Activated CD8-positive, alpha-beta T cell treated with anti-CD3 and anti-CD28 coated beads, Interleukin-2, amount 10 ng/mL, durations not matched to agents 7 days and 5 days (primary cell): ENCODE measurements at regions of chr16 and their contacts with region 1.

Region 1: DNA sequence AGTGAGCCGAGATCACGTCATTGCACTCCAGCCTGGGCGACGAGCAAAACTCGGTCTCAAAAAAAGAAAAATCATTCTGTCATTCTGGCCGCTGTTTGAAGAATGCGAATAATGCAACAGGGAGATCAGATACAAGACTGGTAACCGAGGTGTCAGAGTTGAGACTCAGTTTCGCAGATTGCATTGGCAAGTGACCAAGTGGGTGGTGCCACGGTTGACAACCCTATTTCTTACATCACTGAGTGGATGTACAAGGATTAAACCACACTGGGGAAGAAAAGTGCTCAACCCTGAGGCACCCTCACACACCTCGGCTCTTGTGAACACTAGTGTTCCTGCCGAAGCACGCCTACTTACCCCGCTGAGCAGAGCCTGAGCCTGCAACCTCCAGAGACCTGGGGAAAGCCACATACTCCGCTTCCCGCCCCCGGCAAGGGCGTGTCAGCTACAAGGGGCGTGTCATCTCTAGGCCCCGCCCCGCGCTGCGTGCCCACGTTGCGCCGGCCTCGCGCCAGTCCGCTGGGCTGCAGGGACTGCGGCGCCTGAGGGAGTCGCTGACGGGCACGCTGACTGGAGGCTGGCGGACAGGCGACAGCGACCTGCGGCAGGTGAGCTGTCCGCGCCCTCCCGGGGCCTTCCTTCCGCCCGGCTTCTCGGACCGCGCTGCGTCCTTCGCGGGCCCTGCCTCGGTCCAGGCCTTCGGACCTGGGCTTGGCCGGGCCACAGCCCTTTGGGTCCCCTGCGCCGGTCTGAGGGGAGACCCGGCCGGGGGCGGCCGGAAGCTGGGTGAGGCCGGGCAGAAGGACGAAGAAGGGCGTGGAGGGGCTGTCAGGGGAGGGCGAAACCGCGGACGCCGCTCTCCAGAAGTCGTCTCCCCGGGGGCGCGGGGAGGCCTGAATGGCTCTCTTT is at the start of gene HMOX2:
- DNase-seq: peak; percentile 95
- ATAC-seq: peak; percentile 84
- H3K4me3 Mint-ChIP-seq: peak within 1 kb of the TSS; percentile 92
- H3K27ac Mint-ChIP-seq: peak within 1 kb of the TSS; percentile 90
- H3K4me1 Mint-ChIP-seq: peaks cover 45% of the 10 kb centered on the region
- H3K27me3 Mint-ChIP-seq: no peaks in the 10 kb centered on the region
- total RNA-seq, gene HMOX2: 92.6 to 97.4 TPM

Region 2: DNA sequence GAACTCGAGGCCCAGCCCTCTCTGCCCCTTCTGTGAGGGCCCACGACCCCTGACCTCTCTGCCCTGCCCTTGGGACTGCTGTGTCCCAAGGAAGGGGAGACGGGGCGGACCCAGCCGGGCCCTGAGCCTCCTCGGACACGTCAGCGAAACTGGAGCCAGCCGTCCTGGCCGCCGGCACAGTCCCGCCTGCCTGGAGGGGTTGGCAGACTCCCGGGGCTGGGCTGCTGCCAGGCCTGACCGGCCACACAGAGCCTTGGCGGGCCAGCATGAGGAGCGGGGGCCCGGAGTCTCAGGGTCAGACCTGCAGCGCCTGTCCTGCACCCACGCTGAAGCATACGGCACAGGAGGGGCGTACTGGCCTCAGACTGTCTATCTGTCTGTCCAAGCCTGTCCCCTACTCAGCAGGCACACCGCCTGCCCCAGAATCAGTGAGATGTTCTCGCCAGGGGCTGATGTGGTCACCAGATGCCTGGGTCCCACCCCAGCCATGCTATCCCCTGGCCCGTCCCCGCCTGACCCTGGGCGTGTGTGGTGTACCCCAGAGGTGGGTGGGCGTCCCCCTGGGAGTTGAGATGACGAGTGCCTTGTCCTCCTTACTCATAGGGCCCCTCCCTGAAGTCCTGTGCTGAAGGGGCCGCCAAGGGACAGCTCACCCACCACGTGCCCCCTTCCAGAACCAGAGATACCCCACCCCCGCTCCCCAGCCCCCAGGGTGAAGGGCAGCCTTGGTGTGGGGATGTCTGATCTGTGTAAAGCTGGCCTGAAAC is 99.8 kb before region 1 on chr16:
- CTCF ChIA-PET with region 1: no interaction called
- POLR2A ChIA-PET with region 1: no interaction called
- DNase-seq: no peak
- ATAC-seq: no peak
- H3K4me3 Mint-ChIP-seq: no peak overlapping the region
- H3K27ac Mint-ChIP-seq: no peak overlapping the region
- H3K4me1 Mint-ChIP-seq: peaks cover 2% of the 10 kb centered on the region
- H3K27me3 Mint-ChIP-seq: no peaks in the 10 kb centered on the region

Region 3: DNA sequence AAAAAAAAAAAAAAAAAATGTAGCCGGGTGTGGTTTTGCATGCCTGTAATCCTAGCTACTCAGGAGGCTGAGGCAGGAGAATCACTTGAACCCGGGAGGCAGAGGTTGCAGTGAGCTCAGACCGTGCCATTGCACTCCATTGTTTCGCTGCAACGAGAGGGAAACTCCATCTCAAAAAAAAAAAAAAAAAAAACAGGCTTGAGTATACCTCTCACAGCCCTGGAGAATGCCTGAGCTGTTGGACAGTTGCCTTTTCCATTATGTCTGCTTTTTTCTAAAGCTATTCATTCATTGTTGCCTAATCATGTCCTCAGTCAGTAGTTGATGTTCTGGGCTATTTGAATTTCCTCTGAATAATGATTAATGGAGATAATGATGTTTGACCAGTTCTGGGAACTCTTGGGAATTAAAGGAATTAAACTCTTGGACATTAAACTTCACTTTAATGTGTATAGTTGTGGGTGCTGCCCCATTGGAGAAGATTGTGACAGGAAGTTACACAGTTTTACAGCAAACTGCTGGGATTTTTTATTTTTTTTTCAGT is 11.9 kb after region 1 on chr16:
- CTCF ChIA-PET with region 1: interaction called, 47 read pairs
- POLR2A ChIA-PET with region 1: interaction called, 31 read pairs
- DNase-seq: peak; percentile 35
- ATAC-seq: peak; percentile 68
- H3K4me3 Mint-ChIP-seq: peak overlapping the region; percentile 64
- H3K27ac Mint-ChIP-seq: peak overlapping the region; percentile 92
- H3K4me1 Mint-ChIP-seq: peaks cover 62% of the 10 kb centered on the region
- H3K27me3 Mint-ChIP-seq: no peaks in the 10 kb centered on the region

Region 4: GRCh38 chr16:4494746-4495490 is 18.8 kb after region 1 on chr16:
- CTCF ChIA-PET with region 1: interaction called, 173 read pairs
- POLR2A ChIA-PET with region 1: interaction called, 14 read pairs
- DNase-seq: no peak
- ATAC-seq: no peak
- H3K4me3 Mint-ChIP-seq: no peak overlapping the region
- H3K27ac Mint-ChIP-seq: peak overlapping the region; percentile 43
- H3K4me1 Mint-ChIP-seq: peaks cover 65% of the 10 kb centered on the region
- H3K27me3 Mint-ChIP-seq: no peaks in the 10 kb centered on the region

Region 5: GRCh38 chr16:4500272-4500671 is 24.1 kb after region 1 on chr16:
- CTCF ChIA-PET with region 1: interaction called, 173 read pairs
- POLR2A ChIA-PET with region 1: interaction called, 30 read pairs
- DNase-seq: no peak
- ATAC-seq: no peak
- H3K4me3 Mint-ChIP-seq: no peak overlapping the region
- H3K27ac Mint-ChIP-seq: no peak overlapping the region
- H3K4me1 Mint-ChIP-seq: peaks cover 72% of the 10 kb centered on the region
- H3K27me3 Mint-ChIP-seq: no peaks in the 10 kb centered on the region

Region 6: GRCh38 chr16:4550591-4550990 is 74.5 kb after region 1 on chr16:
- CTCF ChIA-PET with region 1: interaction called, 13 read pairs
- POLR2A ChIA-PET with region 1: interaction called, 3 read pairs
- DNase-seq: no peak
- ATAC-seq: no peak
- H3K4me3 Mint-ChIP-seq: no peak overlapping the region
- H3K27ac Mint-ChIP-seq: no peak overlapping the region
- H3K4me1 Mint-ChIP-seq: peaks cover 16% of the 10 kb centered on the region
- H3K27me3 Mint-ChIP-seq: peaks cover 12% of the 10 kb centered on the region

Region 7: DNA sequence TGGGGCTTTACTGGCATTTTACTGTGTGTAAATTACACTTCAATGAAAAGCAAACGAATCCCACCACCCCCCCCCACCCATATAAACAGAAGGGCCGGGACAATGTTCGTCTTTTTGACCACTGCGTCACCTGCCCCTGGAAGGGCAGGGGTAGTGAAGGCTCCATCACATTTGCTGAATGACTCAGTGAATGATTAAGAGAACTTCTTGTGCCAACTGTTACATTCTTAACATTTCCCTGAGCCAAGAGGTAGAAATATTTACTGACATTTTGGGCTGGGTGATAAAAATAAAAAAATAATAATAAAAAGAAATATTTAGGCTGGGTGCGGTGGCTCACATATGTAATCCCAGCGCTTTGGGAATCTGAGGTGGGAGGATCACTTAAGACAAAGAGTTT is 104.1 kb after region 1 on chr16:
- CTCF ChIA-PET with region 1: no interaction called
- POLR2A ChIA-PET with region 1: no interaction called
- DNase-seq: no peak
- ATAC-seq: no peak
- H3K4me3 Mint-ChIP-seq: no peak overlapping the region
- H3K27ac Mint-ChIP-seq: no peak overlapping the region
- H3K4me1 Mint-ChIP-seq: peaks cover under 1% of the 10 kb centered on the region
- H3K27me3 Mint-ChIP-seq: no peaks in the 10 kb centered on the region